Activated CD8-positive, alpha-beta T cell treated with anti-CD3 and anti-CD28 coated beads for 36 hours (primary cell): ENCODE measurements at regions of chr21 and their contacts with region 1.

Region 1: DNA sequence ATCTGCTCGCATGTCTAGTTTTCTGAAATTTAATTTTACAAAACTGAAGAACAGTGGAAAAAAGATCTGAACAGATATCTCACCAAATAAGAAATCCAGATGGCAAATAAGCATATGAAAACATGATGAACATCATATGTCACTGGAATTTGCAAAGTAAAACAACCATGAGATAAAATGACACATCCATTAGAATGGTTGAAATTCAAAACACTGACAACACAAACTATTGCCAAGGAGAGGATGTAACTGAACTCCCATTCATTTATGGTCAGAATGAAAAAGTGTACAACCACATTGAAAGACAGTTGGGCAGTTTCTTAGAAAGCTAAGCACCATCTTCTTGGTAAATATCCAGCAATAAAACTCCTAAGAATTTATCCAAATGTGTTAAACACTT is 312.7 kb upstream of the NCAM2 start:
- DNase-seq: no peak
- ATAC-seq: no peak
- H3K4me3 Mint-ChIP-seq: no peak overlapping the region
- H3K27ac Mint-ChIP-seq: no peak overlapping the region
- H3K4me1 Mint-ChIP-seq: no peaks in the 10 kb centered on the region
- H3K27me3 Mint-ChIP-seq: no peaks in the 10 kb centered on the region
- CTCF ChIP-seq: no peak

Region 2: DNA sequence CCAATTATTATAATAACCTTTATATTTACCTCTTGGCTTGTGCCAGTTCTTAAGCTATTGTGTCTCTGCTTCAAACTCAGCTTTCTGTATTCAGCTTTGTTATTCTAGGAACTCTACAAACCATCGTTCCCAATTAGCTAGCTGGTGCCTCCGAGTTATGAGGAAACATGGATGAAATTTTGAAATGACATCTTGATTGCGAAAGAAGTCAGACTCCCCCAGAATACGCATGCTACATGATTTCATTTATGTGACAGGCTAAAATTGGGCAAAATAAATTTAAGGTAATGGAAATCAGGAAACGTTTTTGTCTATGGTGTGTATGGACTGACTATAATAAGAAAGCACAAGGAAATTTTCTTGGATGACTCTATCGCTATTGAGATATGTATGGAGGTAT is 56.0 kb after region 1 on chr21:
- CTCF ChIA-PET with region 1: no interaction called
- POLR2A ChIA-PET with region 1: no interaction called
- intact Hi-C with region 1: loop called (anchors 10 kb)
- DNase-seq: no peak
- ATAC-seq: no peak
- H3K4me3 Mint-ChIP-seq: no peak overlapping the region
- H3K27ac Mint-ChIP-seq: no peak overlapping the region
- H3K4me1 Mint-ChIP-seq: no peaks in the 10 kb centered on the region
- H3K27me3 Mint-ChIP-seq: no peaks in the 10 kb centered on the region
- CTCF ChIP-seq: no peak